Endothelial cell of umbilical vein (primary cell): ENCODE measurements at regions of chr19 and their contacts with region 1.

Region 1: DNA sequence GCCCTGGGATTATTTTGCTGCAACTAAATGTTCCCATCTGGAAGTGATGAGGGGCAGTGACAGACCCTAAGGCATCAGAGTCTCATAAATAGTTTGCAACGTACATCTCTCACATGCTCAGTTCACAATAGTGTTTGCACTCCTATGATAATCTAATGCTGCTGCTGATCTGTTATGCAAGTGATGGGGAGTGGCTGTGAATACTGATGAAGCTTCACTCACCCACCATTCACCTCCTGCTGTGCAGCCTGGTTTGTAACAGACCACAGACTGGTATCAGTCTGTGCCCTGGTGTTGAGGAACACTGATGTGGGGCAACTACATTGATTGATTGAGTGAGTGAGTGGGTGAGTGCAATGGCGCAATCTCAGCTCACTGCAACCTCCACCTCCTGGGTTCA is 54.9 kb downstream of the ZNF726 start:
- DNase-seq: no peak
- H3K4me3 ChIP-seq: no peak overlapping the region
- H3K27ac ChIP-seq: no peak overlapping the region
- H3K4me1 ChIP-seq: no peaks in the 10 kb centered on the region
- H3K27me3 ChIP-seq: no peaks in the 10 kb centered on the region
- CTCF ChIP-seq: no peak
- POLR2A ChIP-seq: no peak

Region 2: GRCh38 chr19:23876261-23876660 is 93.4 kb before region 1 on chr19:
- CTCF ChIA-PET with region 1: no interaction called
- POLR2A ChIA-PET with region 1: no interaction called
- dilution Hi-C with region 1: loop called (anchors 10 kb)
- intact Hi-C with region 1: no loop called
- DNase-seq: no peak
- H3K4me3 ChIP-seq: no peak overlapping the region
- H3K27ac ChIP-seq: no peak overlapping the region
- H3K4me1 ChIP-seq: no peaks in the 10 kb centered on the region
- H3K27me3 ChIP-seq: no peaks in the 10 kb centered on the region
- CTCF ChIP-seq: no peak
- POLR2A ChIP-seq: no peak

Region 3: GRCh38 chr19:23983357-23983756 is 13.7 kb after region 1 on chr19:
- CTCF ChIA-PET with region 1: no interaction called
- POLR2A ChIA-PET with region 1: no interaction called
- dilution Hi-C with region 1: no loop called
- intact Hi-C with region 1: no loop called
- DNase-seq: no peak
- H3K4me3 ChIP-seq: no peak overlapping the region
- H3K27ac ChIP-seq: no peak overlapping the region
- H3K4me1 ChIP-seq: no peaks in the 10 kb centered on the region
- H3K27me3 ChIP-seq: no peaks in the 10 kb centered on the region
- CTCF ChIP-seq: no peak
- POLR2A ChIP-seq: no peak